ENCODE measurements at regions of chr6 and their contacts with region 1.

Region 1: DNA sequence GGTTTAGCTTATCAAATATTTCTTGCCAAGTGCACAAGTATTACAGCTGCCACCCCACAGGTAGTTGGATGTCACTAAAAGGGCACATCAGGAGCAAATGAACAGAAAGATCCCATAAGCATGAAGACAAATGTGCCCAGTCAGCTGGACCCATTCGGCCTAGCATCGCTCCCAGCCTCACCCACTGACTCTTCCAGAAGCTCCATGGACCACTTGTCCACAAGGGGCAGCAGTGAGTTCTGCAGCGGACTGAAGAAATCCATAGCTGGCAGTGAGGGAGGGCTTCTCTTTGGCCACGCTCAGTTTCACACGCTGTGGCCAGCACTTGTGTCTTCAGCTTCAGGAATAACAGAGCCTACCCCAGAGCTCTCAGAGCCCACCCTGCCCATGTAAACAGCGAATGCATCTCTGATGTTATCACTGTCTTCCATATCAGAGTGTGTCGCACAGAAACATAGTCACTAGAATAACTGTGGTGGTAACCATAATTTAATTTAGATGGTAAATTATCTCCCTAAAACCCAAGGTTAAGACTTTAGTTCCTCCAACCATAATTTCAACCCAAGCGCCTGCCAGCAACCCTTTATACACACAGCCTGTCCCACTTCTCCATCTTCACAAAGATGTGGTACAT is 15.8 kb downstream of the CGA start:
- DNase-seq: no peak
- H3K4me3 ChIP-seq: no peak overlapping the region
- H3K27me3 ChIP-seq: peaks cover 9% of the 10 kb centered on the region; the same call in 1 of the 2 replicates
- CTCF ChIP-seq: peak; percentile 95

Region 2: GRCh38 chr6:87066449-87067333 is 12.4 kb before region 1 on chr6:
- CTCF ChIA-PET with region 1: interaction called, 27 read pairs
- POLR2A ChIA-PET with region 1: no interaction called
- DNase-seq: peak; percentile 8
- H3K4me3 ChIP-seq: no peak overlapping the region
- H3K27me3 ChIP-seq: peaks cover 5% of the 10 kb centered on the region; the same call in 1 of the 2 replicates
- CTCF ChIP-seq: peak; percentile 59

Region 3: DNA sequence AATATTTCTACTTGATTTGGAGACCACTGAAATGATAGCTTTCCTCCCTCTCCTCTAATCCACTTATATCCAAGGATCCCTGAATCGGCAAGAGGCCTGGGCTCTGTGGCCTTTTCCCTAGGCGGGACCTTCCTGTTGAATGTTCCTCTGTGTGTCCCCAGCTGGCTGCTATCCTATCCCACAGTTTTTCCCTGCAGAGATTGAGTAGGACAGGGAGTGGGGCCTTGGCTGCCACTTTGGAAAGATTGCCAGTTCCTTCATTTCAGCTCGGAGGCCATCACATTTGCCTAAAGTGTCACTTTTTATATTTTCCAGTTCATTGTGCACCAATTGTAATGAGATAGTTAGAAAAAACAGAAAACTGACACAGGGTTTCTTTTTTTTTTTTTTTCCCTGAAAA is 204.4 kb after region 1 on chr6:
- CTCF ChIA-PET with region 1: no interaction called
- POLR2A ChIA-PET with region 1: interaction called, 10 read pairs
- DNase-seq: no peak
- H3K4me3 ChIP-seq: no peak overlapping the region
- H3K27me3 ChIP-seq: no peaks in the 10 kb centered on the region
- CTCF ChIP-seq: no peak

Measured in BJ (cell line).